ENCODE measurements at regions of chr10 and their contacts with region 1.

Region 1: DNA sequence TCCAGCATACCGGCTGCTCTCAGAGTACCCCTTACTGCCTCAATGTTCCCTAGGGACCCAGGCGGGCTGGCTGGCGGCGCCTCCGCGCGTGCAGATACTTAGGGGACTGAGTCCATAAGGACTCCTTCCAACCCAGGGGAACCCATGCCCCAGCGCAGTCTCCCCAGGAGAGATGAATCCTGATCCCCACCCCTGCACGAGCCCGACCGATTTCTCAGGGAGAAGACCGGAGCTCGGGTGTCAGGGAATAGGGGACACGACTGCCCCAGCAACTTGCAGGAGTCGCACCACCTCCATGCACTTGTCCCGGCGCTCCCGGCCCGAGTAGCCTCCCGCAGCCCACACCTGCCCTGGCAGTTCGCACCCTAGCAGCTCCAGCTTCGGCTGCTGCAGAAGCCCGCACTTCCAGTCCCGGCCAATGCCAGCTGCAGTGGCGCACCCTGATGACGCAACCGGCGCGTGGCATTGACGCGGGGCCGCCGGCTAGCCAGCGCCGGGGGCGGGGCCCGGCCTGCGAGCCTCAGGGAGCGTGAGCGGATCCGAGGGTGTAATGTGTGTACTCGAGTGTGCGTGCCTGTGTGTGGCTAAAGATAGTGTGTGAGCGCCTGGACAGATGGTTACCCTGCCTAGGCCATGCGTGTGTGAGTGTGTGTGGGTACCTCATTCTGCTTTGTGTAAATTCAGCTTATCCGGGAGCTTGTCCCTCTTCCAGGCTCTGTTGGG is at the start of gene GPAM:
- DNase-seq: peak; percentile 60
- ATAC-seq: peak; percentile 97
- H3K4me3 ChIP-seq: peak within 1 kb of the TSS; percentile 84
- H3K27ac ChIP-seq: peak within 1 kb of the TSS; percentile 73
- H3K4me1 ChIP-seq: no peaks in the 10 kb centered on the region
- H3K27me3 ChIP-seq: no peaks in the 10 kb centered on the region
- CTCF ChIP-seq: no peak
- EP300 ChIP-seq: peak; percentile 17 to 73; a peak in 1 of 4 replicates
- POLR2A ChIP-seq: peak; percentile 97
- RAD21 ChIP-seq: no peak
- polyA plus RNA-seq, gene GPAM: 3.3 to 5.7 TPM

Region 2: GRCh38 chr10:112173206-112173605 is 10.3 kb before region 1 on chr10:
- CTCF ChIA-PET with region 1: interaction called, 14 read pairs
- POLR2A ChIA-PET with region 1: interaction called, 4 read pairs
- RAD21 ChIA-PET with region 1: no interaction called
- SMC1A ChIA-PET with region 1: interaction called, 4 read pairs
- in situ Hi-C with region 1: no loop called
- intact Hi-C with region 1: no loop called
- DNase-seq: no peak
- ATAC-seq: no peak
- H3K4me3 ChIP-seq: no peak overlapping the region
- H3K27ac ChIP-seq: no peak overlapping the region
- H3K4me1 ChIP-seq: no peaks in the 10 kb centered on the region
- H3K27me3 ChIP-seq: no peaks in the 10 kb centered on the region
- CTCF ChIP-seq: no peak
- EP300 ChIP-seq: no peak
- POLR2A ChIP-seq: no peak
- RAD21 ChIP-seq: no peak

Region 3: GRCh38 chr10:112195224-112195623 is 11.7 kb after region 1 on chr10:
- CTCF ChIA-PET with region 1: no interaction called
- POLR2A ChIA-PET with region 1: interaction called, 5 read pairs
- RAD21 ChIA-PET with region 1: no interaction called
- SMC1A ChIA-PET with region 1: interaction called, 11 read pairs
- in situ Hi-C with region 1: no loop called
- intact Hi-C with region 1: no loop called
- DNase-seq: no peak
- ATAC-seq: peak; percentile 52
- H3K4me3 ChIP-seq: no peak overlapping the region
- H3K27ac ChIP-seq: no peak overlapping the region
- H3K4me1 ChIP-seq: no peaks in the 10 kb centered on the region
- H3K27me3 ChIP-seq: no peaks in the 10 kb centered on the region
- CTCF ChIP-seq: no peak
- EP300 ChIP-seq: no peak
- POLR2A ChIP-seq: no peak
- RAD21 ChIP-seq: no peak

Region 4: DNA sequence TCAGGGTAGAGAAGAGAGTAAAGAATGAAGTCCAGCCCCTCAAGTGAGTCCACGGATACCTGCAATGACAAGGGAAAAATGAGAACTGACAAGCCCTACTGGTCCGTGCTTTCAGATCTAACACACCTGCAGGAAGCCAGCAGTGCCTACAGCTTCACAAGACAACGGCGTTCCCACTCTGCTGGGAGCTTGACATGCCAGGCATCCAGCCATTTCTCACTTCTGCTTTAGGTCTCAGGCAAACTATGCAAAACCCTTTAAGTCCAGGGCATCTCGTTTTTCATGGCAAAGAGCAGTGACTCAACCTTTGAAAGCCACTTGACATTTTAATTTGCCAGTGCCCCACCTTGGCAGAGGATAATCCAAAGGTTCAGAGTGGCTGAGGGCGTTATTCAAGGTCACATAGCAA is 49.2 kb after region 1 on chr10:
- CTCF ChIA-PET with region 1: no interaction called
- POLR2A ChIA-PET with region 1: no interaction called
- RAD21 ChIA-PET with region 1: no interaction called
- SMC1A ChIA-PET with region 1: no interaction called
- in situ Hi-C with region 1: no loop called
- intact Hi-C with region 1: no loop called
- DNase-seq: no peak
- ATAC-seq: peak; percentile 32; the same call in 2 of the 3 replicates
- H3K4me3 ChIP-seq: no peak overlapping the region
- H3K27ac ChIP-seq: no peak overlapping the region
- H3K4me1 ChIP-seq: peaks cover 6% of the 10 kb centered on the region
- H3K27me3 ChIP-seq: no peaks in the 10 kb centered on the region
- CTCF ChIP-seq: no peak
- EP300 ChIP-seq: no peak
- POLR2A ChIP-seq: no peak
- RAD21 ChIP-seq: no peak

Region 5: DNA sequence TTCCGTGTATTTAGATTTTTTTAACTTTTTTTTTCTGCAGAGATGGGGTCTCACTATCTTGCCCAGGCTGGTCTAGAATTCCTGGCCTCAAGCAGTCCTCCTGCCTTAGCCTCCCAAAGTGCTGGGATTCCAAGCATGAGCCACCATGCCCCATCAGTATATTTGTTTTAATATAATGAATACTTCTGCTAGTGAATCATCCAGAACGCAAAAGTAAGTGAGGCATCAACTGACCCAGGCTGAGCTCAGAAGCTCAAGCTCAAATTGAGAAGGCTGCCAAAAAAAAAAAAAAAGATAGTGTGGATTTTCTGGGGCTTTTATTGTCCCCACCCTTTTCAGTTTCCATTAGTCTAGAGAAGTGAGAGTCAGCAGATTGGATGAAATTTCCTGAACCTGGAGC is 60.7 kb after region 1 on chr10:
- CTCF ChIA-PET with region 1: no interaction called
- POLR2A ChIA-PET with region 1: no interaction called
- RAD21 ChIA-PET with region 1: no interaction called
- SMC1A ChIA-PET with region 1: no interaction called
- in situ Hi-C with region 1: no loop called
- intact Hi-C with region 1: no loop called
- DNase-seq: no peak
- ATAC-seq: no peak
- H3K4me3 ChIP-seq: no peak overlapping the region
- H3K27ac ChIP-seq: no peak overlapping the region
- H3K4me1 ChIP-seq: no peaks in the 10 kb centered on the region
- H3K27me3 ChIP-seq: no peaks in the 10 kb centered on the region
- CTCF ChIP-seq: no peak
- EP300 ChIP-seq: no peak
- POLR2A ChIP-seq: no peak
- RAD21 ChIP-seq: no peak

Region 6: GRCh38 chr10:112307358-112308124 is 124.1 kb after region 1 on chr10:
- CTCF ChIA-PET with region 1: interaction called, 6 read pairs
- POLR2A ChIA-PET with region 1: no interaction called
- RAD21 ChIA-PET with region 1: no interaction called
- SMC1A ChIA-PET with region 1: interaction called, 3 read pairs
- in situ Hi-C with region 1: no loop called
- intact Hi-C with region 1: loop called (anchors 5 kb)
- DNase-seq: no peak
- ATAC-seq: peak; percentile 89
- H3K4me3 ChIP-seq: no peak overlapping the region
- H3K27ac ChIP-seq: no peak overlapping the region
- H3K4me1 ChIP-seq: no peaks in the 10 kb centered on the region
- H3K27me3 ChIP-seq: no peaks in the 10 kb centered on the region
- CTCF ChIP-seq: peak; percentile 75 to 84 (median 78)
- EP300 ChIP-seq: no peak
- POLR2A ChIP-seq: no peak
- RAD21 ChIP-seq: peak; percentile 68

Region 7: GRCh38 chr10:112461029-112461887 is 277.8 kb after region 1 on chr10:
- CTCF ChIA-PET with region 1: no interaction called
- POLR2A ChIA-PET with region 1: no interaction called
- RAD21 ChIA-PET with region 1: no interaction called
- SMC1A ChIA-PET with region 1: no interaction called
- in situ Hi-C with region 1: no loop called
- intact Hi-C with region 1: loop called (anchors 10 kb)
- DNase-seq: no peak
- ATAC-seq: no peak
- H3K4me3 ChIP-seq: no peak overlapping the region
- H3K27ac ChIP-seq: no peak overlapping the region; the same call in 1 of the 2 replicates
- H3K4me1 ChIP-seq: no peaks in the 10 kb centered on the region
- H3K27me3 ChIP-seq: no peaks in the 10 kb centered on the region
- CTCF ChIP-seq: no peak
- EP300 ChIP-seq: no peak
- POLR2A ChIP-seq: no peak
- RAD21 ChIP-seq: no peak